ENCODE measurements at regions of chr11 and their contacts with region 1.

Region 1: GRCh38 chr11:102914238-102915043 is 39.7 kb upstream of the MMP12 start:
- DNase-seq: peak; percentile 15
- H3K4me3 ChIP-seq: no peak overlapping the region
- H3K27ac ChIP-seq: no peak overlapping the region
- H3K27me3 ChIP-seq: no peaks in the 10 kb centered on the region
- CTCF ChIP-seq: peak; percentile 85

Region 2: DNA sequence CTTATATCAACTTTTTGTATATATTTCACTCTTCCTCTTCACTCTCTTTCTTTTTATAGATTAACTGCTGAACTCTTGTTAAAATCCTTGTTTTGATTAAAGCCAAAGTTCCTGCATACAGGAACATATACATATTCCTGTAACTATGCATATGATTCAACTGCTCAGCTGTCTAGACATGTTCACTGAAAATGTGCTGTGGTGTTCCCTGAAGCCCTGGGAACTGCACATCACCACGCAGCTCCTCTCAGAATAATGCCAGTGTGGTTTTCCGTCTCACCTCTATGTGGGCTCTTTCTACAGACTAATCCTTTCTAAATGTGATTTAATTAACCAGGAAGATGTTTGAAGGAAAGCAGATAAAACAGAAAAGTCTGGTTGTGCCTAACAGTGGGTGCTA is 14.1 kb before region 1 on chr11:
- CTCF ChIA-PET with region 1: interaction called, 15 read pairs
- POLR2A ChIA-PET with region 1: no interaction called
- DNase-seq: no peak
- H3K4me3 ChIP-seq: no peak overlapping the region
- H3K27ac ChIP-seq: no peak overlapping the region
- H3K27me3 ChIP-seq: no peaks in the 10 kb centered on the region
- CTCF ChIP-seq: no peak

Region 3: GRCh38 chr11:102950622-102951107 is 36.2 kb after region 1 on chr11:
- CTCF ChIA-PET with region 1: interaction called, 32 read pairs
- POLR2A ChIA-PET with region 1: no interaction called
- DNase-seq: no peak
- H3K4me3 ChIP-seq: no peak overlapping the region
- H3K27ac ChIP-seq: no peak overlapping the region
- H3K27me3 ChIP-seq: no peaks in the 10 kb centered on the region
- CTCF ChIP-seq: no peak

Region 4: GRCh38 chr11:103016031-103016430 is 101.6 kb after region 1 on chr11:
- CTCF ChIA-PET with region 1: no interaction called
- POLR2A ChIA-PET with region 1: no interaction called
- DNase-seq: no peak
- H3K4me3 ChIP-seq: no peak overlapping the region
- H3K27ac ChIP-seq: no peak overlapping the region
- H3K27me3 ChIP-seq: no peaks in the 10 kb centered on the region
- CTCF ChIP-seq: no peak

Region 5: GRCh38 chr11:103035791-103036434 is 121.5 kb after region 1 on chr11:
- CTCF ChIA-PET with region 1: interaction called, 15 read pairs
- POLR2A ChIA-PET with region 1: no interaction called
- DNase-seq: peak; percentile 34
- H3K4me3 ChIP-seq: no peak overlapping the region
- H3K27ac ChIP-seq: no peak overlapping the region
- H3K27me3 ChIP-seq: no peaks in the 10 kb centered on the region
- CTCF ChIP-seq: peak; percentile 66

Region 6: GRCh38 chr11:103055221-103055890 is 140.9 kb after region 1 on chr11:
- CTCF ChIA-PET with region 1: interaction called, 40 read pairs
- POLR2A ChIA-PET with region 1: no interaction called
- DNase-seq: peak; percentile 16
- H3K4me3 ChIP-seq: no peak overlapping the region
- H3K27ac ChIP-seq: no peak overlapping the region
- H3K27me3 ChIP-seq: no peaks in the 10 kb centered on the region
- CTCF ChIP-seq: peak; percentile 67

Region 7: DNA sequence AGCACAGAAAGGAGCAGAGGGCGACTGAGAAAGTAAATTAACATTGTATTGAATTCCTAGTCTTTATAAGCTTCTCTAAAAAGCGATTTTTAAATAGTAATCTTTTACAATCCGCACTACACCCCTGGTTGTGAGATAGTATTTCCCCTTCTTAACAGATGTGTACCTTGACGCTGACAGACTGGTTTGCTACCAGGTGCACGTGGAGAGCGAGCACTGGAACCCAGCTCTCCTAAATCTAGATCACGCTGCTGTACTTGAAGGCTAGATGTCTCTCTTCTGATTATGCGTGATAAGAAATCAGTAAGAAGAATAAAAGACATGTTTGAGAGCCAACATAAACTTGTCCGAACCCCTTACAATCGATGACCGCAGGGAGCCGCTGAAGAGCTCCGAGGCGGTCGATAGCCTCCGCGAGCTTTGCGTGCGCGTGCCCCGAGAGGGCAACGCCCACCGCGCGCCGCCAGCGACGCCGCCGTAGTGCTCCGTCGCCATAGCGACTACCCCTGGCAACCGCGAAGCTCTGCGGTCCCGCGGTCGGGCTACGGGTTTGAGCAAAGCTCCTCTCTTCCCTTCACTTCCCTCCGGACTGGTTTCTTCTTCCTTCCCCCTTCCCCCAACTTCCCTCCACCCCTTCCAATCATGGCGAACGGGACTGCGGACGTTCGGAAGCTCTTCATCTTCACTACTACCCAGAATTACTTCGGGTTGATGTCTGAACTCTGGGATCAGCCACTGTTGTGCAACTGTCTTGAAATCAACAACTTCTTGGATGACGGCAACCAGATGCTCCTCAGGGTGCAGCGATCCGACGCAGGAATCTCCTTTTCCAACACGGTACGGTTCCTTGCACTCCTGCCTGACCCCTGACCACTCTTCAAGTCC is 194.7 kb after region 1 on chr11 and contains the start of gene DYNC2H1:
- CTCF ChIA-PET with region 1: interaction called, 13 read pairs
- POLR2A ChIA-PET with region 1: no interaction called
- DNase-seq: peak; percentile 86
- H3K4me3 ChIP-seq: peak within 1 kb of the TSS; percentile 86
- H3K27ac ChIP-seq: peak within 1 kb of the TSS; percentile 81
- H3K27me3 ChIP-seq: no peaks in the 10 kb centered on the region
- CTCF ChIP-seq: peak; percentile 57
- polyA plus RNA-seq, gene DYNC2H1: 20.6 and 25.3 TPM in 2 replicates